Calu3 (cell line): ENCODE measurements at regions of chr11 and their contacts with region 1.

Region 1: DNA sequence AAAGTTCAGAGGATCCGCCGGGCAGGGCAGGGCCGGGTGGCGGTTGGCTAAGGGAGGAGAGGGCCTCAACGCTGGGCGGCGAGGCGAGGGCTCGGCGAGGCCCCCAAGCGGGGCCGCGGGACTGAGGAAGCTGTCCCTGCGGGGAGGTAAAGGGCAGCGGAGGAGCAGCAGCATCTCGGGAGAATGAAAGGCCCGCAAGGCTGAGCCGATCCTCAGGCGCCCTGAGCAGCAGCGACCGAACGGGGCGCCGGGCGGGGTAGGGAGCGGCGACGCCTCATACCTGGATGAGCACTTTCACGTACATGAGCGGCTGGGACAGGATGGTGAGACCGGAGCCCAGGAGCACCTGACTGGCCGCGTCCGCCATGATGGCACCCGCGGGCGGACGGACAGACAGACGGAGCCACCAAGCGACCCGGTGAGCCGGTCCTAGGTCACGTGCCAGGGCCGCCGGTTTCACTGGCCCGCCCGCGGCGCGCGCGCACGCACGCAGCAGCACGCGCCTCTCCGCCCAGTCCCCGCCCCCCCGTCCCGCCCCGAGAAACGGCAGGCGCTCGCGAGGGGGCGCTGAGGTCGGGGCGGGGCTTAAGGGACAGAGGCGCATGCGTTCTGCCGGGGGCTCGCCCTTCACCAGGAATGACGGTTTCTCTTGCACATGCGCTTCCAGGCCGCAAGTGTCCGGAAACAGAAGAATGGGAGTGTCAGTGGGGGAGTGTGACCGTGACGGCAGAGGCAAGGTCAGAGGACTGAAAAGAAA is at the start of gene MTCH2:
- DNase-seq: peak; percentile 96
- H3K4me3 Mint-ChIP-seq: peak within 1 kb of the TSS; percentile 80
- H3K27ac Mint-ChIP-seq: peak within 1 kb of the TSS; percentile 82
- H3K4me1 Mint-ChIP-seq: no peaks in the 10 kb centered on the region
- H3K27me3 Mint-ChIP-seq: peaks cover 11% of the 10 kb centered on the region
- CTCF ChIP-seq: peak; percentile 18
- total RNA-seq, gene MTCH2: 103 TPM in 2 replicates

Region 2: GRCh38 chr11:47715082-47715669 is 72.9 kb after region 1 on chr11 and contains the start of gene AGBL2:
- CTCF ChIA-PET with region 1: interaction called, 3 read pairs
- intact Hi-C with region 1: loop called (anchors 5 kb)
- DNase-seq: peak; percentile 81
- H3K4me3 Mint-ChIP-seq: peak within 1 kb of the TSS; percentile 91
- H3K27ac Mint-ChIP-seq: peak within 1 kb of the TSS; percentile 91
- H3K4me1 Mint-ChIP-seq: no peaks in the 10 kb centered on the region
- H3K27me3 Mint-ChIP-seq: no peaks in the 10 kb centered on the region
- CTCF ChIP-seq: no peak
- total RNA-seq, gene AGBL2: 3.2 and 6.1 TPM in 2 replicates